Breast epithelium (tissue), 4 donors: ENCODE measurements at regions of chr2 and their contacts with region 1.

Region 1: DNA sequence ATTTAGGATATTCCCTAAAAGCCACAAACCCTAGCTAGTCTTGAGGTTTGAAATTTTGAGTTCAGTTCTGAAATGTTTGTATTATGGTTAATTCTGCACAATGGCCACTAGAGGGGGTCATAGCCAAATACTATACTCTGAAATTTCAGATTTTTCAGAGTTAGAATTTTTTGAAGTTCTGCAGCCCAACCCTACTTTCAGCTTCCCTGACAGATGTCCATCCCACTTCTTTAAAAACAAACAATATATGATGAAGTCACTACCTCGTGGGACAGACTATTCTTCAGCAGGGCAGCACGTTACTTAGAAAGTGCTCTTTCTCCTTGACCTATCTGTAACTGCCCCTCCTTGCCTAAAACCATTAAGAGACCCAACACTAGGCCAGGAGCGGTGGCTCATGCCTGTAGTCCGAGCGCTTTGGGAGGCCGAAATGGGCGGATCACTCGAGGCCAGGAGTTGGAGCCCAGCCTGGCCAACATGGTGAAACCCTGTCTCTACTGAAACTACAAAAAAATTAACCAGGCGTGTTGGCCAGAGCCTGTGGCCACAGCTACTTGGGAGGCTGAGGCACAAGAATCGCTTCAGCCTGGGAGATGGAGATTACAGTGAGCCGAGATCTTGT is 48.2 kb upstream of the PAPOLG start:
- DNase-seq: no peak
- H3K4me3 ChIP-seq: no peak overlapping the region
- H3K27ac ChIP-seq: no peak overlapping the region
- H3K4me1 ChIP-seq: no peaks in the 10 kb centered on the region
- H3K27me3 ChIP-seq: no peaks in the 10 kb centered on the region
- CTCF ChIP-seq: peak; percentile 61 to 69 (median 68)
- POLR2A ChIP-seq: no peak

Region 2: GRCh38 chr2:60735496-60736250 is 27.8 kb after region 1 on chr2:
- intact Hi-C with region 1: loop called (anchors 2 kb)
- DNase-seq: no peak
- H3K4me3 ChIP-seq: peak overlapping the region; percentile 21 to 68 (median 48)
- H3K27ac ChIP-seq: no peak overlapping the region
- H3K4me1 ChIP-seq: no peaks in the 10 kb centered on the region
- H3K27me3 ChIP-seq: no peaks in the 10 kb centered on the region
- CTCF ChIP-seq: no peak
- POLR2A ChIP-seq: no peak

Region 3: GRCh38 chr2:60998628-60999545 is 291.0 kb after region 1 on chr2:
- intact Hi-C with region 1: loop called (anchors 10 kb)
- DNase-seq: no peak
- H3K4me3 ChIP-seq: no peak overlapping the region
- H3K27ac ChIP-seq: no peak overlapping the region
- H3K4me1 ChIP-seq: no peaks in the 10 kb centered on the region
- H3K27me3 ChIP-seq: no peaks in the 10 kb centered on the region
- CTCF ChIP-seq: peak; percentile 40 to 67 (median 59)
- POLR2A ChIP-seq: no peak